Transverse colon (tissue), 4 donors: ENCODE measurements at regions of chr15 and their contacts with region 1.

Region 1: DNA sequence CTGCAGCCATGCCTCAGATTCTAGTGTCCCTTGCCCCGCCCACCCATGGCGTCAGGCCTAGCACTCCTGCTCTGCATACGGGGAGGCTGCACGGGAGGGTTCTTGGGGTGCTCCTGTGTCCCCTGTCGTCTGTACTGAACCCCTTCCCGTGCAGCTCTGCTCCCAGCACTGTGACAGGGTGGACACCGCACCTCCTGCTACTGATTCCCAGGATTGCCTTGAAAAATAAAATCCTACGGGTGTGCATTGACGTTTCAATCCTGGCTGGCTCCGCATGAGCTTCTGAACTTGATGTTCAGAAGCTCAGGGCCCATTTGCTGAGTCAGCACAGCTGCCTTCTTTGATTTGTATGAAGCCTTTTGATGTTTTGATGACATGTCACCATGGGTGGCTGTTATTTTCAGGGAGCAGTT is 176.4 kb downstream of the APBA2 start:
- DNase-seq: no peak
- H3K4me3 ChIP-seq: no peak overlapping the region
- H3K27ac ChIP-seq: no peak overlapping the region
- H3K4me1 ChIP-seq: no peaks in the 10 kb centered on the region
- H3K27me3 ChIP-seq: no peaks in the 10 kb centered on the region
- CTCF ChIP-seq: no peak
- EP300 ChIP-seq: no peak
- POLR2A ChIP-seq: no peak

Region 2: GRCh38 chr15:27730868-27731267 is 1331.3 kb before region 1 on chr15:
- in situ Hi-C with region 1: no loop called
- intact Hi-C with region 1: loop called (anchors 10 kb)
- DNase-seq: no peak
- H3K4me3 ChIP-seq: no peak overlapping the region
- H3K27ac ChIP-seq: no peak overlapping the region
- H3K4me1 ChIP-seq: no peaks in the 10 kb centered on the region
- H3K27me3 ChIP-seq: no peaks in the 10 kb centered on the region
- CTCF ChIP-seq: no peak
- EP300 ChIP-seq: no peak
- POLR2A ChIP-seq: no peak

Region 3: DNA sequence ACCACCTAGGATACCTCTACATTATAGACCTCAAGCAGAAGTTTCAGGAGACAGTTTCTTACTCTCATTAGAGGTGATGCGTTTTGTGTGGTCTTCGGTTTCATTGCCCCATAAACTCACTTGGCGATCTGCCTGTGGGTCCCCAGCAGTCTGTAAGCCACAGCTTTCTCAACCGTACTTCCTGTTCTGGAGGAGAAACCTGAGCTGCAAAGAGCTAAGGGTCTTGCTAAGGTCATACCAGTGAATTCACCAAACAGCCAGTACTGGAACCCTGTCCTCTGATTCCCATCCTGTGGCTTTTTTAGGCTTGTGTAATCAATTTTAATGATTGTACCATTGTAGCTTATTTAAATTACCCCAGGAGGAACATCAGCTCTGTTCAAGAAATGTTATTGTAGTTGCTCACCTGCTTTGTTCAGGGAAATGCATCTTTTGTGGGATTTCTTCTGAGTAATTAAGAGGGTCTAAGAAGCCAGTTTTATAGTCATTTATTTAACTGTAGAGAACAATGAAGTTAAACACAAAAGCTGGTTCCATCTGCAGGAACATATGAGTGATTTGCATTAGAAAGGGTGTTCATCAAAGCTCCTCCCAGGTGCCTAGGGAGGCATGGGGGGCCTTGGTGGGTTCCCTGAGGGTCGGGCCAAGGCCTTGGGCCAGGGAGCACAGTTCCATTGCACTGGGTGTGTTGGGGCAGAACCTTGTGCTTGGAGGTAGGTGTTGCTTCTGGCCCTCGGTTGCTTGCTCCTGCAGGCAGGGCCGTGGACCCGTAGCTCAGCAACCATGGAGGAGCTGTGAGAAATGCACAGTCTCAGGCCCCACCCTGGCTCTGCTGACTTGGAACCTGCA is 106.8 kb before region 1 on chr15:
- in situ Hi-C with region 1: no loop called
- intact Hi-C with region 1: no loop called
- DNase-seq: no peak
- H3K4me3 ChIP-seq: no peak overlapping the region
- H3K27ac ChIP-seq: no peak overlapping the region
- H3K4me1 ChIP-seq: no peaks in the 10 kb centered on the region
- H3K27me3 ChIP-seq: no peaks in the 10 kb centered on the region
- CTCF ChIP-seq: no peak
- EP300 ChIP-seq: no peak
- POLR2A ChIP-seq: no peak

Region 4: DNA sequence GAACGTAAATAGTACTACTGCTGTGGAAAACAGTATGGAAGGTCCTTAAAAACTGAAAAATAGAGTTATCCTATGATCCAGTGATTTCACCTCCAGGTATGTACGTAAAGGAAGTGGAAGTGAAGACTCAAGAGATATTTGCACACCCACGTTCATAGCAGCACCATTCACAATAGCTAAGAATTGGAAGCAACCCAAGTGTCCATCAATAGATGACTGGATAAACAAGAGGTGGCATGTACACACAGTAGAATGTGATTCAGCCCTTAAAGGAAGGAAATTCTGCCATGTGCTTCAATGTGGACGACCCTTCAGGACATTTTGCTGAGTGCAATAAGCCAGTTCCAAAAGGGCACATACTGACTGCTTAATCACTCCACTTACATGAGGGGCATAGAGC is 11.9 kb after region 1 on chr15:
- in situ Hi-C with region 1: no loop called
- intact Hi-C with region 1: no loop called
- DNase-seq: no peak
- H3K4me3 ChIP-seq: no peak overlapping the region
- H3K27ac ChIP-seq: no peak overlapping the region
- H3K4me1 ChIP-seq: no peaks in the 10 kb centered on the region
- H3K27me3 ChIP-seq: no peaks in the 10 kb centered on the region
- CTCF ChIP-seq: no peak
- EP300 ChIP-seq: no peak
- POLR2A ChIP-seq: no peak